Transverse colon (tissue), 4 donors: ENCODE measurements at regions of chr5 and their contacts with region 1.

Region 1: DNA sequence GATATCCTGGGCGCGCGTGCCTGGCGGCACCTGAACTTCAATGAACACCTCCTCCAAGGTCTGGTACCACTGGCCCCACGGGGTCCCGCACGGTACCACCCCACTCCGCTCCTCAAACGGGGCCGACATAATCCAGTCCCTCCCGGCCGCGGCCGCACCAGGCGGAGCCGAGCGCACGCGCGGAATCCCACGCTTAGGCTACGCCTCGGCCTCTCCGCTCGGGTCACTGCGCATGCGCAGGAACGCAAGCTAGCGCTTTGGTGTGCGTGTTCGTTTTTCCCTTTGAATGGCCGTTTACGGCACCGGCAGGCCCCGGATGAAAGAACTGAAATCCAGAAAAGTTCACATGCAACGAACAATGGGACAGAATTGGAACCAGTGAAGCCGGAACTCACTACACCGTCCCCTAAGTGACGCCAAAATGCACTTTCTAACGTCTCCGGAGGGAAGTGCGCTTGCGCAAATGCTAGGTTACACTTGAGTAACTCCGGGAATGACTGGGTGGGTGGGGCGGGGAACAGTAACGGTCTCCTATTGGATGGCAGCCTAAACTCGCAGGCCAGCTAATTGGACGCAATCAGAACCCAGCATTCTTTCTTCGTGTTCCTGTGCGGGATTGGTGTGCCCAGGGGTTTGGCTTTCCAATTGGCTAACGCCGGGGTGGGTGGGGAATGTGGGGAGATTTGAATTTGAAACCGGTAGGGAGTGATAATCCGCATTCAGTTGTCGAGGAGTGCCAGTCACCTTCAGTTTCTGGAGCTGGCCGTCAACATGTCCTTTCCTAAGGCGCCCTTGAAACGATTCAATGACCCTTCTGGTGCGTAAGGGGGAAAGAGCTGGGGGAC is at the starts of genes HMMR and NUDCD2:
- DNase-seq: peak; percentile 94
- H3K4me3 ChIP-seq: peak within 1 kb of the TSS; percentile 65 to 78 (median 68)
- H3K27ac ChIP-seq: peak within 1 kb of the TSS; percentile 95 to 96 (median 95)
- H3K4me1 ChIP-seq: peaks cover 14 to 36% (median 25%) of the 10 kb centered on the region in 4 donors
- H3K27me3 ChIP-seq: no peaks in the 10 kb centered on the region
- CTCF ChIP-seq: peak in 1 of 5 experiments; percentile 39
- EP300 ChIP-seq: no peak
- POLR2A ChIP-seq: peak; percentile 89
- total RNA-seq, gene HMMR: 1.6 to 5.7 (median 1.9) TPM in 3 of 4 donors, not detected in the other
- total RNA-seq, gene NUDCD2: 1.5 to 6.2 (median 3.1) TPM

Region 2: GRCh38 chr5:162664846-162665245 is 795.3 kb before region 1 on chr5:
- in situ Hi-C with region 1: no loop called
- intact Hi-C with region 1: no loop called
- DNase-seq: no peak
- H3K4me3 ChIP-seq: no peak overlapping the region
- H3K27ac ChIP-seq: no peak overlapping the region
- H3K4me1 ChIP-seq: no peaks in the 10 kb centered on the region
- H3K27me3 ChIP-seq: no peaks in the 10 kb centered on the region
- CTCF ChIP-seq: no peak
- EP300 ChIP-seq: no peak
- POLR2A ChIP-seq: no peak

Region 3: DNA sequence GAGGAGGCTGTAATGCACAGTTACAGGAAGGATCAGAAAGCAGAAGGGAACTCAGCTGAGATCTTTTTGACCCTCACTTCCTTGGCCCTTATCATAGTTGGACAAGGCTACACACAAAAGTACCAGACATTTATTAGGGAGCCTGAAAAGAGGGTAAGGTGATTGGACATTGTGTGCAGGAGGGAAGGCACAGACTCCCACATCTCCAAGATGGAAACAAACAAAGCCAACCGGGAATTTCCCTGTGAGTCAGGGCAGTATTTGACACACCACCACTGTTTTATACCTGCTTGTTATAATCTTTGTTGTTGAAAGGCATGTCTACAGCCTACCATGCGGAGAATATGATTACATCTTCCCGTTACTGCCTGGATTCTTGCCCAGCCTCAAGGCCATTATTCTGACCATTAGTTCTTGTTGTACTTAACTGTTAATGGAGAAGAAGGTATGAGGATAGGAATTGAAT is 25.7 kb before region 1 on chr5:
- in situ Hi-C with region 1: no loop called
- intact Hi-C with region 1: no loop called
- DNase-seq: peak; percentile 45
- H3K4me3 ChIP-seq: no peak overlapping the region
- H3K27ac ChIP-seq: peak overlapping the region; percentile 42 to 72 (median 64)
- H3K4me1 ChIP-seq: peaks cover 9 to 61% (median 27%) of the 10 kb centered on the region in 4 donors
- H3K27me3 ChIP-seq: no peaks in the 10 kb centered on the region
- CTCF ChIP-seq: no peak
- EP300 ChIP-seq: no peak
- POLR2A ChIP-seq: no peak

Region 4: DNA sequence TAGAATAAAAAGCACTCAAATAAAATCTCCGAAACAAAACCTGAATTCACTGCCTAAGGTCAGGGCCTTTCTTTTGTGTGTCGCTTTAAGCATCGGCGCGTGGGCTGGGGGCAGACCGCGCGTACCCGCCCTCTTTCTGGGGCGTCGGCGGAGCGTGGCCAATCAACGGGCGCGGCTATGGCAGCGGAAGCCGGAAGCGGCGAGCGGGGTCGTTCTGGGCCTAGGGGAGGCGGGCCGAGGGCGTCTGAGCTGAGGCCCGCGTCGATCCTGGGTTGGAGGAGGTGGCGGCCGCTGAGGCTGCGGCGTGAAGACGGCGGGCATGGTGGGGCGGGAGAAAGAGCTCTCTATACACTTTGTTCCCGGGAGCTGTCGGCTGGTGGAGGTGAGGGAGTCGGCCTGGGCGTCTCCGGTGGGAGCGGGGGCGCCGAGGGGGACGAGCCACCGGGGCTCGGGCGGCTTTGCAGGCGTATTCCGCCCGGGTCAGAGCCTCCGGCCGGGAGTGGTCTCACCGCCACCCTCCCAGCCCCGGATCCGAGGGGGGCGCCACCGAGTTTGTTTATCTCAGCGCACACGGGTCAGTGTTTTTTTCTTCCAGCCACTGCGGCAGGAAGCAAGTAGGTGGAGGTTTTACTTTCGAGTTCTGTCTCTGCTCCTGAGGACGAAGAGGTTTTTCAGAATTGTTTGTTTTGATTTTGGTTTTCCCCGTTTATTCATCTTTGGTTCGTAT is 45.4 kb after region 1 on chr5 and contains the start of gene MAT2B:
- in situ Hi-C with region 1: loop called in 1 of 4 experiments (anchors 10 kb)
- intact Hi-C with region 1: loop called (anchors 2 kb)
- DNase-seq: peak; percentile 97
- H3K4me3 ChIP-seq: peak within 1 kb of the TSS; percentile 84 to 98 (median 88)
- H3K27ac ChIP-seq: peak within 1 kb of the TSS; percentile 99 to 100 (median 99)
- H3K4me1 ChIP-seq: peaks cover 24 to 61% (median 38%) of the 10 kb centered on the region in 4 donors
- H3K27me3 ChIP-seq: no peaks in the 10 kb centered on the region
- CTCF ChIP-seq: peak; percentile 33 to 62 (median 38)
- EP300 ChIP-seq: no peak
- POLR2A ChIP-seq: peak; percentile 98
- total RNA-seq, gene MAT2B: 20.2 to 409 (median 71.6) TPM